ENCODE measurements at regions of chr10 and their contacts with region 1.

Region 1: DNA sequence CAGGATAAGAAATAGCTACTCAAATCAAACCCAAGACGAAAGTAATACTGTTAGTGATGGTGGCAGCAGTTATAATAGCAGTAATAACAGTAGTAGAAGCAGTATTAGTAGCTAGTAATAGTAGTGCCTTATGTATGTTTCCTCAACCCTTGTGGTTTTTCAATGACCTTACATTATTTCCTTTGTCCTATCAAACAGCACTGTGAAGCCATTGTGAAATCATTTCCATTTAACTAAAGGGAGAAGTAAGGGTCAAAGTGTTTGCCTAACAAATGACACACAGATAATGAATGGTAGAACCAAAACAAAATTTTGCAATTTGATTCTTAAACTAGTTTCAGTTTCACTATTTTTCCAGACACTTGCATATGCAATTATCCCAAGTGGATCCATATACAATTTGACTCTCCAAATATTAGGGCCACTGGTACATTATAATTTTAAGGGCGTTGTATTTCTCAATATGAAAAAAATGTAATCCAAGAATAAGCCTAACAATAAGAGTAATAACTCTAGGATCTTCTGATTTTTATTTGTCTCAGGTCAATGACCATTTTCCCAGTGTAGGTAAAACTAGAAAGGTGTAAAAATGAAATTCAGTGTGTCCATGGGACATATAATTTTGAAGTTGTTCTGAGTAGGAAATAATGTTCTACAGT is 33.7 kb upstream of the TMEM26 start:
- DNase-seq: no peak
- H3K4me3 ChIP-seq: no peak overlapping the region
- H3K27ac ChIP-seq: no peak overlapping the region
- H3K4me1 ChIP-seq: no peaks in the 10 kb centered on the region
- H3K27me3 ChIP-seq: no peaks in the 10 kb centered on the region
- CTCF ChIP-seq: no peak
- POLR2A ChIP-seq: no peak

Region 2: DNA sequence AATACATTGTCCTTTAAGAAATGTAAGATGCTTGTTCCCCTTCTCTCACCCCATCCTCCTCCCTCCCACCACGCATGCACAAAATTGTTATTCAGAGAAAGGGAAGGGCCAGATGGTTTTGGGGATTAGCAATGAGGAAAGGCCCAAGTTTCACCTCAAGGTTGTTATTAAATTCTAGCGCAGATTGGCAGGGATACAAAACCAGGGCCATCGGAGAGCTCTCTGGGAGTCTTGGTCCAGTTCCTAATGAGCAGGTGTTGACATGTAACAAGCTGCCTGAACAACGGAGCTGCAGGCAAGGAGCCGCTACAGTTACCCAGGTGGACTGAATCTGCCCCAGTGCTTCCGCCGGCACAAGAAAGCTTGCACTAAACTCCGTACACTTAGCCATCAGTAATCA is 1087.5 kb before region 1 on chr10:
- intact Hi-C with region 1: loop called (anchors 5 kb)
- DNase-seq: no peak
- H3K4me3 ChIP-seq: no peak overlapping the region
- H3K27ac ChIP-seq: no peak overlapping the region
- H3K4me1 ChIP-seq: peaks cover 18% of the 10 kb centered on the region
- H3K27me3 ChIP-seq: no peaks in the 10 kb centered on the region
- CTCF ChIP-seq: no peak
- POLR2A ChIP-seq: no peak

Region 3: GRCh38 chr10:61404751-61405150 is 82.1 kb before region 1 on chr10:
- intact Hi-C with region 1: no loop called
- DNase-seq: no peak
- H3K4me3 ChIP-seq: no peak overlapping the region
- H3K27ac ChIP-seq: no peak overlapping the region
- H3K4me1 ChIP-seq: no peaks in the 10 kb centered on the region
- H3K27me3 ChIP-seq: no peaks in the 10 kb centered on the region
- CTCF ChIP-seq: no peak
- POLR2A ChIP-seq: no peak

Region 4: DNA sequence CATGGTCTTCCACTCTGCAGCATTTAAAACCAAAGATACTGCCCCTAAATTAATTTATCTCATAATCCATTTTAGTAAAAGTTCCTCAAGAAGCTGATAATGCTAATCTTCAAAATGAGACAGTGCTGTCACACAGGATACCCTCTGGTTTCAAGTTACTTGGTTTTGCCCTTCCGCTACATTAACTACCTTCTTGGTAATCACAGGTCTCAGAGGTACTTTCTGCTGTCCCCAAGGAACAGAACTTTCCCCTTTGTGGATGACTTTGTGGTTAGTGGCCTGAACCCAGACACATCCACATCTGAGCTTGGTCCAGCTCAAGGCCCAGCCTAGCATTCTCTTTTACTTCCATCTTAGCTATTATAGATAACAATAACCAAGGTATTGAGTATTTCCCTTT is 55.1 kb after region 1 on chr10:
- intact Hi-C with region 1: no loop called
- DNase-seq: no peak
- H3K4me3 ChIP-seq: no peak overlapping the region
- H3K27ac ChIP-seq: no peak overlapping the region
- H3K4me1 ChIP-seq: no peaks in the 10 kb centered on the region
- H3K27me3 ChIP-seq: no peaks in the 10 kb centered on the region
- CTCF ChIP-seq: no peak
- POLR2A ChIP-seq: no peak